Activated T-helper 1 cell treated with anti-CD3 and anti-CD28 coated beads, Interleukin-12 subunit alpha, Interleukin-12 subunit beta, Interleukin-2, Interleukin-4 antibody, amounts not matched to agents 30 ng/mL and 10 ng/mL and 1 ng/mL, durations not matched to agents 14 hours and 24 hours and 36 hours (primary cell): ENCODE measurements at regions of chr16 and their contacts with region 1.

Region 1: DNA sequence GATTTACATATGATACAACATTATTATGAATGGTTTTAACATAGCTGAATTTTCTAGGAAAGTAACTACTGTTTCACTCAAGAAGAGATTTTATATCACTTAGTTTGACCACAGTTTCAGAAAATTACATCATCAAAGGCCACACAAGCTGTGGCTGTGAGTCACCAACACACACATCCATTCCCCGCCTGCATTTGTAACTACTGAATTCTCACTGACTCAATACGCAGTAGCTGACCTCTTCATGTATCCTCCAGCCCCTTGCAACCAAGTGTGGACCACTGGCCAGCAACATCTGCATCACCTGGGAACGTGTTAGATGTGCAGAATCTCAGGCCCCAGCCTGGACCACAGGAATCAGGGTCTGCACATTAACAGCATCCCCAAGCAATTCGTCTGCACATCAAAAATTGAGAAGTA is 197.6 kb downstream of the XYLT1 start:
- DNase-seq: peak; percentile 37
- H3K4me3 Mint-ChIP-seq: no peak overlapping the region
- H3K27ac Mint-ChIP-seq: peak overlapping the region; percentile 16
- H3K4me1 Mint-ChIP-seq: peaks cover 56% of the 10 kb centered on the region
- H3K27me3 Mint-ChIP-seq: no peaks in the 10 kb centered on the region

Region 2: DNA sequence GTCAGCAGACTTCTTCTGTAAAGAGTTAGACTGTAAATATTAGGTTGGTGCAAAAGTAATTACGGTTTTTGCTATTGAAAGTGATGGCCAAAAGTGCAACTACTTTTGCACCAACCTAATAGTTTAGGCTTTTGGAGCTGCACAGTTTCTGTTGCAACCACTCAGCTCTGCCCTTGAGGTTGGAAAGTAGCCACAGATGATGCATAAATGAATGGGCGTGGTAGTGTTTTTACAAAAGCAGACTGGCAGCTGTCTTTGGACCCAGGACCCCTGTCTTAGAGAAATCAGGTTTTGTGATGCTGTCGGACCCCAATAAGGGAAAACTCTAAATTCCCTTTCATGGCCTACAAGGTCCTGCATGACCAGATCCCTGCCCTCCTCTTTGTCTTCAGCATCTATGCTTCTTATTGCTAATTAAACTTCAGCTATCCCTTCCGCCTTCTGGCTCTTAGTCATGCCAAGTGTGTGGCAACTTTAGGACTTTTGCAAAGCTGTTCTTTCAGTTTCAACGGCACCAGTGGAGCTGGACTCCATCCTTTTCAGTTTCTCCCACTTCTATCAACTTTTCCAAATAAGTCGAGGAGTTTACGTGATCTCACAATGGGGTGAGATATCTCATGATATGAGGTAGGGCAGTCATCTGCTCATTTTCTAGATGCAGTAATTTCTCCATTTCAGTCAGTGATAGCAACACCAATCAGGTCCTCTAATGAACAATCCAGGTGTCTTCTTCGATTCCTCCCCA is 34.7 kb before region 1 on chr16:
- intact Hi-C with region 1: loop called (anchors 1 kb)
- DNase-seq: no peak
- H3K4me3 Mint-ChIP-seq: no peak overlapping the region
- H3K27ac Mint-ChIP-seq: peak overlapping the region; percentile 69
- H3K4me1 Mint-ChIP-seq: peaks cover 29% of the 10 kb centered on the region
- H3K27me3 Mint-ChIP-seq: no peaks in the 10 kb centered on the region

Region 3: GRCh38 chr16:17258848-17259713 is 14.1 kb before region 1 on chr16:
- intact Hi-C with region 1: no loop called
- DNase-seq: no peak
- H3K4me3 Mint-ChIP-seq: no peak overlapping the region
- H3K27ac Mint-ChIP-seq: no peak overlapping the region
- H3K4me1 Mint-ChIP-seq: peaks cover 29% of the 10 kb centered on the region
- H3K27me3 Mint-ChIP-seq: no peaks in the 10 kb centered on the region

Region 4: GRCh38 chr16:17304491-17305119 is 31.5 kb after region 1 on chr16:
- intact Hi-C with region 1: loop called (anchors 1 kb)
- DNase-seq: no peak
- H3K4me3 Mint-ChIP-seq: no peak overlapping the region
- H3K27ac Mint-ChIP-seq: no peak overlapping the region
- H3K4me1 Mint-ChIP-seq: peaks cover 46% of the 10 kb centered on the region
- H3K27me3 Mint-ChIP-seq: peaks cover 2% of the 10 kb centered on the region

Region 5: DNA sequence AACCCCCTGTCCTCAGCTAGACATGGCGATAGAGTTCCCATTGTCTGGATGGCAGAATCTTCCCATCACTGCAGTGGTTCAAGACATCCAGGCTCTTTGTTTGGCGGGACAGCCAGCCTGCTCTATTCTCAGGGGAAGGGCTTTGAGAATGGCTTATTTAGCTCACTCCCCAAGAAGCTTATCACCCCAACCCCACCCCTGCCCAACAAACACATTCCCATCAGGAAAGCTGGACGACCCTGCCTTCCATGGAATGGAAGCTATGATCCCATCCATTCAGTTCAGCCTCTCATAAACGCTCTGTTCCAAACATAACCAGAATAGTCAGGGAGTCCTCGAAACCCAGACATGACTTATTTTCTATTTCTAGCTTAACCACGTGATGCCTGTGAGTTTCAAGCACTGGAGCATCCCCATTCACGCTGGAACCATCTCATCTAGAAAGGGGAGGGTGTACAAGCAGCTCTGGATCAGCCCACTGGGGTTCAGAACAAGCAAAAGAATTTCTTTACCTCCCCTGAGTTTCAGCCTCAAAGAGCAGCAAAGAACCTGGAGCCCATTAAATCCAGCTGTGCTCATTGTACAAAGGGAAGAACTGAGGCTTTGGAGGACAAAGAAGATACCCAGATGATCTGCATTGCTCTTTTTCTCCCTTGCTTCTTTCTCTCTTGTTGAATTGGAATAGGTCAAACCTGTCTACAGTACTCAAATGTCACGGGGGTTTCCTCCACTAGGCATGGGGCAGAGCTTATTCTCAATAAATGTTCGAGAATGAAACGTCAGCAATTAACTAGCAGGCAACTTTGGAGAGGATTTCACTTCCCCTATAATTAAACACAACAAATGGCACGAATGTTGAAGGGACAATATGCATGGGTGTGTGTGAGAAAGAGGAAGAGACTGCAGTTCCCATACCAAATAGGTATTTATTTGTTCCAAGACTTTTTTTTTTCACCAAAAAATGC is 104.5 kb after region 1 on chr16:
- intact Hi-C with region 1: loop called (anchors 1 kb)
- DNase-seq: no peak
- H3K4me3 Mint-ChIP-seq: no peak overlapping the region
- H3K27ac Mint-ChIP-seq: peak overlapping the region; percentile 33
- H3K4me1 Mint-ChIP-seq: peaks cover 59% of the 10 kb centered on the region
- H3K27me3 Mint-ChIP-seq: no peaks in the 10 kb centered on the region

Region 6: DNA sequence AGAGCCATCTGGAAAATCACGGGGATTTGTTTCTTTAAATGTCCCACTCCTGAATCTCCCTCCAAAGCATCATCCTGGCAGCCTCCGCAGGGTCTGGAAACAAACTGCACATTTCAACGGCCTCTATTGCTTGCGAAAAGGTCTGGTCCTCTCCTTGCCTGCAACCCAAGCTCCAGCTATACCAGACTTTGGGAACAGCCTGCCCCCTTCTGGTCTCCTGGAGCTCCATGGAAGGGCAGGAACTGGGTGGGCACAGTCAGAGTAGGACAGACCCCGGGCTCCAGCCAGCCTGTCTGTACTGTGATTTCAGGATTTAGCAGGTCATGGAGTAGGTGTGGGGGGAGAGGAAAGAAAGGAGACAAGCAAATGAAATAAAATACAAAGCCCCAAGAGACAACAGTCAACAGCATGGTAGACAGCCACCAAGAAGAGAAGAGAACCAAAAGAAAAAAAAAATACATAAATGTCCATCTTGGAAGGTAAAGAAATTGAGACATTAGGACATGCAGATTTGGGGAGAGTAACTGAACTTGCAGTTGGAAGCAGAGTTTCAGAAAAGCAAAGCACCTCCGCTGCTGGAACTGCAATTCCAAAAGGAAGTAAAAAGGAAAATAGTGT is 194.9 kb after region 1 on chr16:
- intact Hi-C with region 1: loop called (anchors 2 kb)
- DNase-seq: no peak
- H3K4me3 Mint-ChIP-seq: peak overlapping the region; percentile 93
- H3K27ac Mint-ChIP-seq: peak overlapping the region; percentile 4
- H3K4me1 Mint-ChIP-seq: peaks cover 59% of the 10 kb centered on the region
- H3K27me3 Mint-ChIP-seq: no peaks in the 10 kb centered on the region